Calu3 (cell line): ENCODE measurements at regions of chr10 and their contacts with region 1.

Region 1: DNA sequence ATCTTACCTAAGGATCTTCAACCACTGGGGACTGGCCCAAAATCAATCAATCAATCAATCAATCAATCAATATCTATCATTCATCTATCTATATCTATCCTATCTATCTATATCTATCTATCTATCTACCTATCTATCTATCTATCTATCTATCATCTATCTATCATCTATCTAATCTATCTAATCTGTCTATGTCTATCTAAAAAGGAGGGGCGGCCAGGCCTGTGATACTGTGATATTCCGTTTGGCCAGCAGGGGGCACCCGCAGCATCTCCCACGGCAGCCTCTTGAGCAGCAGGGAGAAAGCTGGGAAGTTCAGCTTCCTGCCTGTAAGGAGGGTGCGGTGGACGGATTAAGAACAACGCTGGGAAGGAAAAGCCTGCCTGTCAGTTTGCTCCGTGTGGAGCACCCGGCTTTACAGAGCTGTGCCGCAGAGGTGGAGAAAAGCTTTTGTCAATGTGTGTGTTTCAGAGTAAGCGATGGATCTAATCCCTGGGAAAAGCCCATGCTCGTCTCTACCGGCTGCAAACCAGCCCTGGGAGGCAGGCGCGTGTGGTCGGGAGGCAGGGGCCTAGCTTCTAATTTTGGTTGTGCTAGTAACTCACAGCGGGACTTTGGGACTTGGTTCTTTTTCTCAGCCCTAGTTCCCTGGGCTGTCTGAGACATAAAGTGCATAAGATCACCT is 125.0 kb downstream of the SH2D4B start:
- DNase-seq: peak; percentile 93
- H3K4me3 Mint-ChIP-seq: peak overlapping the region; percentile 43
- H3K27ac Mint-ChIP-seq: peak overlapping the region; percentile 18
- H3K4me1 Mint-ChIP-seq: peaks cover 10% of the 10 kb centered on the region
- H3K27me3 Mint-ChIP-seq: peaks cover 61% of the 10 kb centered on the region
- CTCF ChIP-seq: peak; percentile 89

Region 2: DNA sequence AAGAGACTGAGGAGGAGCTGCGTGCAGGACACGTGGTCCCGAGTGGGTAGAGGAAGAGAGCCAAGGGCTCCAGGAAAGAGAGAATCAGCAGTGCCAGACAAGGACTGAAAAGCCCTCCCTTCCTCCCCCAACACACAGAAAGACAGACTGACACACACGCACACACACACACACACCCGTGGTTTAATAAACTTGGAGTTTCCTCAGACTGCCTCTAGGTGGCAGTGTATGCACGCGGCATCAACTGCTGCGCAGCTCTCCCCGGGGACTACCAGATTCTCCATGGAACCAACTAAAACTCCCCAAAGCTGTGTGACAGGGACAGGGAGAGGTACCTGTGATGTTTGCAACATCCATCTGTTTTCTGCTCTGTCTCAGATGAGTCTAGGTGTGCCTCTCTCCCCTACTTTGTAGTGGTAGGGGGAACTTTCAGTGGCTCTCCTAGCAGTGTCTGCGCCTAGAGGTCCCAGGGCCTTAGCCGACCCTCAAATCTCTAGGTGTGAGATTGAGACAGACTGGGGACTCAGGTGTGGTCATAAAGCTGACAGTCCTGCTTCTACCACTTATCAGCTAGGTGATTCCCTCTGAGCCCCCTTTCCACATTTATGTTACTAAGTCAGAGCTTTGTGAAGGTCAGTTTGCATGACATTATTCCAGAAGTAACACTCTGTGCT is 217.9 kb before region 1 on chr10:
- CTCF ChIA-PET with region 1: interaction called, 4 read pairs
- intact Hi-C with region 1: loop called (anchors 1 kb)
- DNase-seq: peak; percentile 66
- H3K4me3 Mint-ChIP-seq: no peak overlapping the region
- H3K27ac Mint-ChIP-seq: no peak overlapping the region
- H3K4me1 Mint-ChIP-seq: peaks cover 31% of the 10 kb centered on the region
- H3K27me3 Mint-ChIP-seq: peaks cover 20% of the 10 kb centered on the region
- CTCF ChIP-seq: peak; percentile 73

Region 3: GRCh38 chr10:80612261-80612660 is 50.5 kb before region 1 on chr10:
- CTCF ChIA-PET with region 1: no interaction called
- intact Hi-C with region 1: no loop called
- DNase-seq: no peak
- H3K4me3 Mint-ChIP-seq: no peak overlapping the region
- H3K27ac Mint-ChIP-seq: no peak overlapping the region
- H3K4me1 Mint-ChIP-seq: no peaks in the 10 kb centered on the region
- H3K27me3 Mint-ChIP-seq: peaks cover 89% of the 10 kb centered on the region
- CTCF ChIP-seq: no peak

Region 4: GRCh38 chr10:80855348-80855971 is 192.7 kb after region 1 on chr10:
- CTCF ChIA-PET with region 1: no interaction called
- intact Hi-C with region 1: loop called (anchors 5 kb)
- DNase-seq: peak; percentile 44
- H3K4me3 Mint-ChIP-seq: no peak overlapping the region
- H3K27ac Mint-ChIP-seq: no peak overlapping the region
- H3K4me1 Mint-ChIP-seq: no peaks in the 10 kb centered on the region
- H3K27me3 Mint-ChIP-seq: peaks cover 55% of the 10 kb centered on the region
- CTCF ChIP-seq: peak; percentile 38

Region 5: GRCh38 chr10:80924063-80924952 is 261.6 kb after region 1 on chr10:
- CTCF ChIA-PET with region 1: interaction called, 6 read pairs
- intact Hi-C with region 1: loop called (anchors 1 kb)
- DNase-seq: peak; percentile 71
- H3K4me3 Mint-ChIP-seq: no peak overlapping the region
- H3K27ac Mint-ChIP-seq: no peak overlapping the region
- H3K4me1 Mint-ChIP-seq: no peaks in the 10 kb centered on the region
- H3K27me3 Mint-ChIP-seq: peaks cover 22% of the 10 kb centered on the region
- CTCF ChIP-seq: peak; percentile 65

Region 6: GRCh38 chr10:80988755-80989154 is 326.0 kb after region 1 on chr10:
- CTCF ChIA-PET with region 1: no interaction called
- intact Hi-C with region 1: no loop called
- DNase-seq: no peak
- H3K4me3 Mint-ChIP-seq: no peak overlapping the region
- H3K27ac Mint-ChIP-seq: no peak overlapping the region
- H3K4me1 Mint-ChIP-seq: no peaks in the 10 kb centered on the region
- H3K27me3 Mint-ChIP-seq: peaks cover 18% of the 10 kb centered on the region
- CTCF ChIP-seq: no peak

Region 7: DNA sequence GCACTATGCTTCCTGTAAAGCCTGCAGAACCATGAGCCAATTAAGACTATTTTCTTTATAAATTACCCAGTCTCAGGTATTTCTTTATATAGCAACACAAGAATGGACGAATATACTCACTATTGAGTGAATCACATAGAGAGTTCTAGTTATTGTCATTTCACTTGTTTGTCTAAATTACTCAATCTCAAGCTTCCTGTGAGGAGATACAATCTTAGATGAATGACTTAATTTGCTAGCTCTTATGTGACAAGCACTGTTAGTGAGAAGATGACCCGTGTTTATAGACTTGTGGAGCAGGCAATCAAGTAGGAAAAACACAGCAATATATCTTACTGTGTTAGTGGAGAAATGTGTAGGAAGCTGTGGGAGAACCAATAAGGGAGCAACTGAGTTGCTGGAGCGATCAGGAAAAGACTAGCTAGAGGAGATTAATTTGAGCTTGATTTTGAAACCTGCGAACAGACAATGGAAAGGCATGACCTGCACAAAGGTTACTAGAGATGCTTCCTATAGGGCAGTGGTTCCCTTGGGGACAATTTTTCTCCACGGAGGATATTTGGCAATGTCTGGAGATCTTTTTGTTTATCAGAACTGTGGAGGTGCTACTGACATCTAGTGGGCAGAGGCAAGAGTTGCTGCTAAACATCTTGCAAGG is 356.1 kb after region 1 on chr10:
- CTCF ChIA-PET with region 1: interaction called, 5 read pairs
- intact Hi-C with region 1: loop called (anchors 10 kb)
- DNase-seq: peak; percentile 52
- H3K4me3 Mint-ChIP-seq: peak overlapping the region; percentile 16
- H3K27ac Mint-ChIP-seq: no peak overlapping the region
- H3K4me1 Mint-ChIP-seq: peaks cover 8% of the 10 kb centered on the region
- H3K27me3 Mint-ChIP-seq: no peaks in the 10 kb centered on the region
- CTCF ChIP-seq: peak; percentile 76

Region 8: GRCh38 chr10:81108516-81109199 is 445.9 kb after region 1 on chr10:
- CTCF ChIA-PET with region 1: no interaction called
- intact Hi-C with region 1: loop called (anchors 10 kb)
- DNase-seq: peak; percentile 69
- H3K4me3 Mint-ChIP-seq: peak overlapping the region; percentile 27
- H3K27ac Mint-ChIP-seq: peak overlapping the region; percentile 91
- H3K4me1 Mint-ChIP-seq: peaks cover 17% of the 10 kb centered on the region
- H3K27me3 Mint-ChIP-seq: no peaks in the 10 kb centered on the region
- CTCF ChIP-seq: no peak